CD14-positive monocyte (primary cell): ENCODE measurements at regions of chr4 and their contacts with region 1.

Region 1: DNA sequence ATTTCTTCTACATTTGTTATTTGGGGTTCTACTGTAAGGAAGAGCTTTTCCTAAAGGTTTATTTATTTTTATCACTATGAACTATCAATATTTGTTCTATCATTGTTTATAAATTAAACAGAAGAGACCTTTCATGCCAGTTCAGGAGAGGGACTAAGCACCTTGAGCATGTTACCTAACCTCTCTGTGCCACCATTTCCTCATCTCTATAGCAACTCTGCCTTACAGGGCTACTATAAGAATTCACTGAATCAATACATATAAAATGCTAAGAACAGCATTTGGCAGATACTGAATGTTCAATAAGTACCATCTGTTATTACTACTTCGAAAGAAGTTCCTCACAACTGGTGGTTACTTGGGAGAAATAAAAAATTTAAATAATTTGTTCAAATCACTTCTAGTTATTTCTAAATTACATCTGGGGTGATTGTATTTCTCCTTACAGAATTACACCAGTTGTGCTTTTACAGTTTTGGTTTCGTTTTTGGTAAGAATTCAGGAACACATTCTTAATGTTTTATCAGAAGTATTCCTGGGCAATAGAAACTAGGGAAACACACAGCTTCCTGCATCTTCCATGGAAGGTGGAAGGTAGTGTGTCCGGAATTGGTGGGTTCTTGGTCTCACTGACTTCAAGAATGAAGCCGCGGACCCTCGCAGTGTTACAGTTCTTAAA is 32.9 kb downstream of the EREG start:
- DNase-seq: peak; percentile 20 to 54 (median 51)
- H3K4me3 ChIP-seq: peak overlapping the region; percentile 78 to 97 (median 89)
- H3K4me3 Mint-ChIP-seq: peak overlapping the region; percentile 99 to 100
- H3K27ac ChIP-seq: peak overlapping the region; percentile 72 to 97
- H3K27ac Mint-ChIP-seq: peak overlapping the region; percentile 95 to 99 (median 98)
- H3K4me1 ChIP-seq: peaks cover 3 to 6% of the 10 kb centered on the region in 2 donors
- H3K4me1 Mint-ChIP-seq: peaks cover 7% of the 10 kb centered on the region
- H3K27me3 ChIP-seq: no peaks in the 10 kb centered on the region
- H3K27me3 Mint-ChIP-seq: peaks cover 0 to 2% (median under 1%) of the 10 kb centered on the region in 3 donors
- CTCF ChIP-seq: no peak

Region 2: GRCh38 chr4:74444891-74445642 is 47.2 kb after region 1 on chr4 and contains the start of gene AREG:
- intact Hi-C with region 1: loop called in 1 of 2 experiments (anchors 10 kb)
- DNase-seq: peak; percentile 73 to 82 (median 80)
- H3K4me3 ChIP-seq: peak within 1 kb of the TSS; percentile 67 to 86 (median 82)
- H3K4me3 Mint-ChIP-seq: peak within 1 kb of the TSS; percentile 96 to 99
- H3K27ac ChIP-seq: peak within 1 kb of the TSS; percentile 72 to 74
- H3K27ac Mint-ChIP-seq: peak within 1 kb of the TSS; percentile 86 to 97 (median 96)
- H3K4me1 ChIP-seq: peaks cover 12 to 16% of the 10 kb centered on the region in 2 donors
- H3K4me1 Mint-ChIP-seq: peaks cover 13% of the 10 kb centered on the region
- H3K27me3 ChIP-seq: peaks cover 3 to 4% of the 10 kb centered on the region in 2 donors
- H3K27me3 Mint-ChIP-seq: peaks cover 0 to 5% (median 2%) of the 10 kb centered on the region in 3 donors
- CTCF ChIP-seq: peak; percentile 81
- polyA plus RNA-seq, gene AREG: 4.2 to 9.2 (median 9.1) TPM

Region 3: GRCh38 chr4:74590152-74590875 is 192.4 kb after region 1 on chr4:
- intact Hi-C with region 1: no loop called
- DNase-seq: no peak
- H3K4me3 ChIP-seq: no peak overlapping the region
- H3K4me3 Mint-ChIP-seq: no peak overlapping the region
- H3K27ac ChIP-seq: no peak overlapping the region
- H3K27ac Mint-ChIP-seq: no peak overlapping the region
- H3K4me1 ChIP-seq: no peaks in the 10 kb centered on the region
- H3K4me1 Mint-ChIP-seq: no peaks in the 10 kb centered on the region
- H3K27me3 ChIP-seq: no peaks in the 10 kb centered on the region
- H3K27me3 Mint-ChIP-seq: peaks cover 0 to 7% (median 0%) of the 10 kb centered on the region in 3 donors
- CTCF ChIP-seq: no peak

Region 4: GRCh38 chr4:74671080-74671698 is 273.3 kb after region 1 on chr4:
- intact Hi-C with region 1: loop called in 1 of 2 experiments (anchors 5 kb)
- DNase-seq: peak; percentile 36 to 61 (median 61)
- H3K4me3 ChIP-seq: no peak overlapping the region
- H3K4me3 Mint-ChIP-seq: no peak overlapping the region
- H3K27ac ChIP-seq: no peak overlapping the region
- H3K27ac Mint-ChIP-seq: no peak overlapping the region
- H3K4me1 ChIP-seq: no peaks in the 10 kb centered on the region
- H3K4me1 Mint-ChIP-seq: peaks cover 4% of the 10 kb centered on the region
- H3K27me3 ChIP-seq: no peaks in the 10 kb centered on the region
- H3K27me3 Mint-ChIP-seq: peaks cover 0 to 6% (median 1%) of the 10 kb centered on the region in 3 donors
- CTCF ChIP-seq: peak; percentile 85